CD8-positive, alpha-beta memory T cell (primary cell): ENCODE measurements at regions of chr7 and their contacts with region 1.

Region 1: GRCh38 chr7:100119701-100120467 is 450 bp downstream of the CNPY4 start:
- DNase-seq: peak; percentile 58 to 83 (median 71)
- H3K4me3 ChIP-seq: peak overlapping the region; percentile 99
- H3K4me3 Mint-ChIP-seq: peak overlapping the region; percentile 95 to 99 (median 97)
- H3K27ac ChIP-seq: peak overlapping the region; percentile 94
- H3K27ac Mint-ChIP-seq: peak overlapping the region; percentile 96 to 100 (median 99)
- H3K4me1 ChIP-seq: peaks cover 21% of the 10 kb centered on the region
- H3K4me1 Mint-ChIP-seq: peaks cover 29 to 41% (median 39%) of the 10 kb centered on the region in 3 donors
- H3K27me3 ChIP-seq: no peaks in the 10 kb centered on the region
- H3K27me3 Mint-ChIP-seq: no peaks in the 10 kb centered on the region

Region 2: GRCh38 chr7:99143853-99144672 is 975.8 kb before region 1 on chr7 and contains the start of gene SMURF1:
- CTCF ChIA-PET with region 1: no interaction called
- POLR2A ChIA-PET with region 1: interaction called, 16 read pairs
- DNase-seq: peak; percentile 66 to 80 (median 74)
- H3K4me3 ChIP-seq: peak within 1 kb of the TSS; percentile 97
- H3K4me3 Mint-ChIP-seq: peak within 1 kb of the TSS; percentile 90 to 96 (median 94)
- H3K27ac ChIP-seq: peak within 1 kb of the TSS; percentile 68
- H3K27ac Mint-ChIP-seq: peak within 1 kb of the TSS; percentile 88 to 96 (median 94)
- H3K4me1 ChIP-seq: peaks cover 21% of the 10 kb centered on the region
- H3K4me1 Mint-ChIP-seq: peaks cover 37 to 46% (median 46%) of the 10 kb centered on the region in 3 donors
- H3K27me3 ChIP-seq: no peaks in the 10 kb centered on the region
- H3K27me3 Mint-ChIP-seq: peaks cover 0 to 12% of the 10 kb centered on the region in 2 donors
- total RNA-seq, gene SMURF1: 14.8 to 14.9 TPM

Region 3: DNA sequence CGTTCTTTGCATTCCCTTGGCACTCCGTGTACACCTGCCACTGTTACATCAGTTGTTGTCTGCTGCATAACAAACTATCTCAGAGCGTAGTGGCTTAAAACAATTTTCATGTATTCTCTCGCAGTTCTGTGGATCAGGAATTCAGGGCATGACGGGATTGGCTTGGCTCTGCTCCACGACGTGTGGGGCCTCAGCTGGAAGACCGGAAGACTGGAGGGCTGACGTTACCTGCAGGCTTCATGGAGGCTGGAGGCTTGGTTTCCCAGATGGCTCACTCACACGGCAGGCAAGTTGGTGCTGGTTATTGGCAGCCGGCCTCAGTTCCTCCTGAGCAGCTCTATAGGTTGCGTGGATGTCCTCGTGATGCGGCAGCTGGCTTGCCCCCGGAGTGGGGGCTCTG is 389.3 kb after region 1 on chr7:
- CTCF ChIA-PET with region 1: no interaction called
- POLR2A ChIA-PET with region 1: no interaction called
- DNase-seq: no peak
- H3K4me3 ChIP-seq: no peak overlapping the region
- H3K4me3 Mint-ChIP-seq: no peak overlapping the region
- H3K27ac ChIP-seq: no peak overlapping the region
- H3K27ac Mint-ChIP-seq: no peak overlapping the region
- H3K4me1 ChIP-seq: peaks cover 7% of the 10 kb centered on the region
- H3K4me1 Mint-ChIP-seq: peaks cover 0 to 2% (median 0%) of the 10 kb centered on the region in 3 donors
- H3K27me3 ChIP-seq: no peaks in the 10 kb centered on the region
- H3K27me3 Mint-ChIP-seq: peaks cover 0 to 1% of the 10 kb centered on the region in 2 donors